ENCODE measurements at regions of chr1 and their contacts with region 1.

Region 1: DNA sequence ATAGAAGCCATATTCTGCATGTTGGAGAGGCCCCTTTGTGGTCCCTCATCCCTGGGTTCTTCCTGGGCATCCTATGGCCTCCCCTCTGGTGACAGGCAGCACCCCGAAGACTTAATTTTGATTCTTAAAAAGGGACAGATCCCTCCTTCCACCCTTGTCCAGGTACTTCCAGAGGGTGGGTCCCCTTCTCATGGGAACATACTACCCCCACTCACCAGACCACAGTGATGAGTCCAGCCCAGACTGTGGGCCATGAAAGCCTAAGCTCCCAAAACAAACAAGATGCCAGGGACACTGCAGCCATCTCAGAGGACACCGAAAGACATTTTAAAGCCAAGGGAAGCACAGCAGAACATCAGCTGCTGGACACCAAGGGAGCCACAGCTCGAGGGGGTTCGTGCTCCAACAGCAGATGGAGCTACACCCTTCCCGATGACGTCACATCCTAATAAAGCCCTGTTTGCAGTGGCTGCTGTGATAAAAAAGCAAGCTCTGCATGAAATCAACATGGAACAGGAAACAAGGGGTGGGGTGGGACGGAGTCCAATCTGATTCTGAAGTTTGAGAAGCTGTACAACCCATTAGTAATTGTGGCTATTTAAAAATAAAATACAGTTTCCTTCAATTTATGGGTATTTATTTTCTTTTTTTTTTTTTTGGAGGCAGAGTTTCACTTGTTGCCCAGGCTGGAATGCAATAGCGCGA is 32.4 kb downstream of the GNB1 start:
- DNase-seq: peak; percentile 33 to 91
- H3K4me3 ChIP-seq: peak overlapping the region in 1 of 2 donors; percentile 19
- H3K27ac ChIP-seq: peak overlapping the region; percentile 76 to 86
- H3K4me1 ChIP-seq: peaks cover 3 to 53% of the 10 kb centered on the region in 2 donors
- H3K27me3 ChIP-seq: no peaks in the 10 kb centered on the region
- CTCF ChIP-seq: peak in 2 of 3 experiments; percentile 25 to 44

Region 2: GRCh38 chr1:1890506-1891348 is 32.2 kb after region 1 on chr1 and contains the start of gene GNB1:
- intact Hi-C with region 1: loop called (anchors 2 kb)
- DNase-seq: peak; percentile 54 to 92
- H3K4me3 ChIP-seq: peak within 1 kb of the TSS; percentile 83 to 95
- H3K27ac ChIP-seq: peak within 1 kb of the TSS; percentile 93 to 94
- H3K4me1 ChIP-seq: peaks cover 0 to 48% of the 10 kb centered on the region in 2 donors
- H3K27me3 ChIP-seq: no peaks in the 10 kb centered on the region
- CTCF ChIP-seq: no peak
- total RNA-seq, gene GNB1: 170 TPM

Region 3: DNA sequence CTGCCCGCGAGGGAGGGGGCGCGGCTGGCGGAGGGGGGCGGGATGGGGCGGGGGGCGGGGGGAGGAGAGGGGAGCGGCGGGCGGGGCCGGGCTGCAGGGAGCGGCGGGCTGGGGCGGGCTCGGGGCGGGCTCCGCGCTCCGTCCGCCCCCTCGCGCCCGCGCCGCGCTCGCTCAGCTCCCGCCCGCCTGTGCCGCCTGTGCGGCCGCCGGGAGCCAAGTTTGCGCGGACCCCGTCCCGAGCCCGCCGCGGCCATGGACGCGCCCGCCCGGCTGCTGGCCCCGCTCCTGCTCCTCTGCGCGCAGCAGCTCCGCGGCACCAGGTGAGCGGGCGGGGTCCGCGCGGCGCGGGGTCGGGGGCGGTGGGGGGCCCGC is 160.6 kb after region 1 on chr1 and contains the start of gene GABRD:
- intact Hi-C with region 1: no loop called
- DNase-seq: no peak
- H3K4me3 ChIP-seq: peak within 1 kb of the TSS; percentile 14 to 30
- H3K27ac ChIP-seq: no peak within 1 kb of the TSS
- H3K4me1 ChIP-seq: peaks cover 0 to 3% of the 10 kb centered on the region in 2 donors
- H3K27me3 ChIP-seq: peaks cover 25% of the 10 kb centered on the region
- CTCF ChIP-seq: no peak
- total RNA-seq, gene GABRD: not detected

Measured in ascending aorta (tissue), 2 donors.